B cell (primary cell): ENCODE measurements at regions of chr20 and their contacts with region 1.

Region 1: GRCh38 chr20:57698117-57698866 is 11.5 kb downstream of the PMEPA1 start:
- DNase-seq: no peak
- ATAC-seq: no peak
- H3K4me3 ChIP-seq: peak overlapping the region in 1 of 5 experiments; percentile 44
- H3K4me3 Mint-ChIP-seq: peak overlapping the region; percentile 79
- H3K27ac ChIP-seq: no peak overlapping the region
- H3K27ac Mint-ChIP-seq: peak overlapping the region; percentile 13
- H3K4me1 ChIP-seq: peaks cover 97 to 99% of the 10 kb centered on the region in 2 donors
- H3K4me1 Mint-ChIP-seq: peaks cover 95% of the 10 kb centered on the region
- H3K27me3 ChIP-seq: no peaks in the 10 kb centered on the region
- H3K27me3 Mint-ChIP-seq: no peaks in the 10 kb centered on the region
- CTCF ChIP-seq: no peak

Region 2: DNA sequence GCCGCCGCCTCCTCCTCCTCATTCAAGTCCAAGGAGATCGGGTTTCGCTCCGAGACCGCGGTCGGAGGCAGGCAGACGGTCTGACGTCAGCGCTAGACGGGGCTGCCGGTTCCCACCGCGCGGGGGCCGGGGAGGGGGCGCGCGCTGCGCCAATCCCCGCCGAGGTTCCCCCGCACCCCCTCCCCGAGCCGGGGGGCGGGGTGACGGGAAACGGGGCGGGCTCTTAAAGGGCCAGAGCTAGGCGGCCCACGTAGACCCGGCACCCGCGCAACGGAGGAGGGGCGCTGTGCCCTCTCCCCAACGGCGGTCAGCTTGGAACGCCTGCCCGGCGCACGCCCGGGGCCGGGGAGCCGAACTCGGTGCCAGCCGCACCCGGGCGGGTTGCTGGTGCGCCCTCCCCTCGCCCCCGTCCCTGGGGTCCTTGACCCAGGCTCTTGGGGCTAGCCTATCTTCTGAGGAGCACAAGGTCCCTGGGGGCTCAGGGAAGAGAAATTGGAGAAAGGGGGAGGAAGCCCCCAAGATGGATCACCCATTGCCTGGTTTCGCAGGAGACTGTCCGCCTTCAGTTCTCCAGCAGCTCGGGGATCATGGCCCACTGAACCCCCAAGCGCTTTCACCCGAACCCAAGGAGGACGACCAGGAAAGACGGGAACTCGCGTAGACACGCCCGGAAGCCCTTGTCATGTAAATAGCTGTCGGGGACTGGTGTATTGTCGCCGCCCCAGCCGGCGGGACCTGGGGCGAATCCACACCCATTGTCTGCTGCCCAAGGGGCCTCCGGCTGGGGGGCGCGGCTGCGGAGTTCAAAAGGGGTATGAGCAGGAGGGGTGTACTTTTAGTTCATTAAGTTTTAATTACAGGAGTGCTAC is 11.9 kb after region 1 on chr20 and contains the start of gene PMEPA1:
- CTCF ChIA-PET with region 1: interaction called, 13 read pairs
- POLR2A ChIA-PET with region 1: interaction called, 8 read pairs
- intact Hi-C with region 1: loop called (anchors 1 kb)
- DNase-seq: peak; percentile 97
- ATAC-seq: peak; percentile 86
- H3K4me3 ChIP-seq: peak within 1 kb of the TSS; percentile 59 to 96 (median 83)
- H3K4me3 Mint-ChIP-seq: peak within 1 kb of the TSS; percentile 99
- H3K27ac ChIP-seq: peak within 1 kb of the TSS; percentile 80 to 99
- H3K27ac Mint-ChIP-seq: peak within 1 kb of the TSS; percentile 92
- H3K4me1 ChIP-seq: peaks cover 49 to 55% of the 10 kb centered on the region in 2 donors
- H3K4me1 Mint-ChIP-seq: peaks cover 53% of the 10 kb centered on the region
- H3K27me3 ChIP-seq: no peaks in the 10 kb centered on the region
- H3K27me3 Mint-ChIP-seq: no peaks in the 10 kb centered on the region
- CTCF ChIP-seq: no peak
- total RNA-seq, gene PMEPA1: 37.4 and 38.7 TPM in 2 replicates

Region 3: GRCh38 chr20:57718490-57719271 is 20.4 kb after region 1 on chr20:
- CTCF ChIA-PET with region 1: no interaction called
- POLR2A ChIA-PET with region 1: interaction called, 3 read pairs
- intact Hi-C with region 1: loop called (anchors 2 kb)
- DNase-seq: peak; percentile 96
- ATAC-seq: peak; percentile 100
- H3K4me3 ChIP-seq: peak overlapping the region in 4 of 5 experiments; percentile 21 to 53 (median 42)
- H3K4me3 Mint-ChIP-seq: peak overlapping the region; percentile 77
- H3K27ac ChIP-seq: no peak overlapping the region
- H3K27ac Mint-ChIP-seq: peak overlapping the region; percentile 81
- H3K4me1 ChIP-seq: peaks cover 9 to 11% of the 10 kb centered on the region in 2 donors
- H3K4me1 Mint-ChIP-seq: peaks cover 8% of the 10 kb centered on the region
- H3K27me3 ChIP-seq: peaks cover 0 to 11% (median 0%) of the 10 kb centered on the region in 4 experiments
- H3K27me3 Mint-ChIP-seq: peaks cover 7% of the 10 kb centered on the region
- CTCF ChIP-seq: no peak